Activated CD4-positive, alpha-beta T cell treated with anti-CD3 and anti-CD28 coated beads, Interleukin-2, amount 10 ng/mL, durations not matched to agents 7 days and 5 days (primary cell): ENCODE measurements at regions of chr17 and their contacts with region 1.

Region 1: GRCh38 chr17:4908301-4908700 is 5.4 kb upstream of the CHRNE start:
- DNase-seq: no peak
- H3K4me3 Mint-ChIP-seq: no peak overlapping the region
- H3K27ac Mint-ChIP-seq: no peak overlapping the region
- H3K4me1 Mint-ChIP-seq: peaks cover 5% of the 10 kb centered on the region
- H3K27me3 Mint-ChIP-seq: peaks cover 12% of the 10 kb centered on the region

Region 2: DNA sequence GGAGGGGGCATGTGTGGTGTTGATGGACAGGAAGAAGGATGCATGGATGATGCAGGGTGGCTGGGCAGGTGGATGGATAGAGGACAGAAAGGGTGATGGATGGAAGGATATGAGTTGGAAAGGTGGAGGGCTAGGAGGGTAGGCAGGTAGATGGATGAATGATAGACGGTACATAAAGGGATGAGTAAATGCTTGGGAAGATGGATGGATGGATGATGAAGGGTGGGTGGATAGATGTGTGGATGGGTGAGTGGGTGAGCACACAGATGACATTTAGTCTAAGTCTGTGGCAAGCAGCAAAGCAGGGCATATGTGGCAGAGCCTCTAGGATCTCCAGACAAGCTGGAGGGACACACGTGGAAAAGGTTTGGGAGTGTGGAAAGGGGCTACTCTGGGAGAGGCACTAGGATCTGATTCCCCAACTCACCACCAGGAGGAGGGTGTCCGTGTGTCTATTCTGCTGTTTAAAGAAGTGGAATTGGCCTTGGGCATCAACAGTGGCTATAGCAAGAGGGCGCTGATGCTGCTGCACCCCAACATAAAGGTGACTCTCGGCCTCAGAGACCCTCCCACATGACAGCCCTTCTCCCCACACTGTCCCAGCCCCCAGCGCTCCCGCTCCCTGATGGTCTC is 93.1 kb before region 1 on chr17:
- CTCF ChIA-PET with region 1: no interaction called
- POLR2A ChIA-PET with region 1: no interaction called
- DNase-seq: no peak
- H3K4me3 Mint-ChIP-seq: no peak overlapping the region
- H3K27ac Mint-ChIP-seq: no peak overlapping the region
- H3K4me1 Mint-ChIP-seq: peaks cover 3% of the 10 kb centered on the region
- H3K27me3 Mint-ChIP-seq: no peaks in the 10 kb centered on the region

Region 3: GRCh38 chr17:4920351-4921048 is 12.2 kb after region 1 on chr17:
- CTCF ChIA-PET with region 1: interaction called, 17 read pairs
- POLR2A ChIA-PET with region 1: interaction called, 6 read pairs
- DNase-seq: no peak
- H3K4me3 Mint-ChIP-seq: no peak overlapping the region
- H3K27ac Mint-ChIP-seq: no peak overlapping the region
- H3K4me1 Mint-ChIP-seq: no peaks in the 10 kb centered on the region
- H3K27me3 Mint-ChIP-seq: no peaks in the 10 kb centered on the region

Region 4: GRCh38 chr17:5065227-5065744 is 157.0 kb after region 1 on chr17:
- CTCF ChIA-PET with region 1: interaction called, 14 read pairs
- POLR2A ChIA-PET with region 1: no interaction called
- DNase-seq: no peak
- H3K4me3 Mint-ChIP-seq: no peak overlapping the region
- H3K27ac Mint-ChIP-seq: no peak overlapping the region
- H3K4me1 Mint-ChIP-seq: peaks cover 12% of the 10 kb centered on the region
- H3K27me3 Mint-ChIP-seq: no peaks in the 10 kb centered on the region